Right ventricle myocardium inferior (tissue), 1 donor: ENCODE measurements at regions of chrX and their contacts with region 1.

Region 1: DNA sequence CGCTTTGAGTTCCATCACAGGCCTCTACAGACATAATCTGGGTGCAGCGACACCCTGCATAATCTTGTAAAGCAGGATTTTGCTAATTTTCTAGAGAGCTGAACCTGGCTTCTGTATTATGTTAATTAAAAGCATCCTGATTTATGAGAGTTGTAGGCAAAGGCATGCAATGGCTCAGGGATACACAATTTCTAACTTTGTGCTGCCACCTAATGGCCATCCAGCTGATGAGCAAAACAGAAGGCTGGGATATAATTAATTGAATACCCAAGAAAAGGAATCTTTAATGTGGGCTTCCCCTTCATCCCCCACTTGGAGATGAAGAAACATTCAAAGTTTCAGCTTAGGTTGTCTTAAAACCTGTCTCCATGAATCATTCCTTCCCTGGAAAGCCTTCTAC is 78.1 kb downstream of the BMP15 start:
- DNase-seq: no peak
- ATAC-seq: no peak

Region 2: DNA sequence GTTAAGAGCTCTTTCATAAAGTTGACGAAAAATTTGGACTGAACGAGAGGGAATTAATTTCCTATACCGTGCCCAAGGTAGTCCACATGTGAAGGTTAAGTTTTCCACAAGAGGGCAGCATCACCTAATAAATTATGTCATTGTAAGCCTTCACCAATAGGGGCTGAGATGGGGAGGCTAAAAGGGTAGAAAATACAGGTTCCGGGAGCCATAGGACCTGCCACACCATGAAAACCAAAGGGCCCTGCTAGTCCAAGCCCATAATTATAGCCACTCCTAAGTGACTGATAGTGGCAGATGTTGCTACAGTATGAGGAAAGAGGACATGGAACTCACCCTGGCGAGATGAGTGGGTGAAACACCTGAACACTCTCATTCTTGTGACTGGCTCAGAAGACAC is 296.8 kb before region 1 on chrX:
- intact Hi-C with region 1: loop called (anchors 2 kb)
- DNase-seq: no peak
- ATAC-seq: no peak

Region 3: GRCh38 chrX:50747471-50747900 is 241.2 kb before region 1 on chrX:
- intact Hi-C with region 1: loop called (anchors 5 kb)
- DNase-seq: no peak
- ATAC-seq: no peak

Region 4: DNA sequence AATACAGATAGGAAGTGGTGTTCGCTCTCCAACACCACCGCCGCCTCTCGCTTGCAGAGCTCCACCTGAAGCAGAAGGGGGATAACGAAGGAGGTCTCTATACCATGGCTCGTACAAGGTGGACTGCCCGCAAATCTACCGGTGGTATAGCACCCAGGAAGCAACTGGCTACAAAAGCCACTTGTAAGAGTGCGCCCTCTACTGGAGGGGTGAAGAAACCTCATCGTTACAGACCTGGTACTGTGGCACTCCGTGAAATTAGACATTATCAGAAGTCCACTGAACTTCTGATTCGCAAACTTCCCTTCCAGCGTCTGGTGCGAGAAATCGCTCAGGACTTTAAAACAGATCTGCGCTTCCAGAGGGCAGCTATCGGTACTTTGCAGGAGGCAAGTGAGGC is 83.3 kb before region 1 on chrX:
- intact Hi-C with region 1: no loop called
- DNase-seq: no peak
- ATAC-seq: no peak